HepG2 (cell line): ENCODE measurements at regions of chr11 and their contacts with region 1.

Region 1: GRCh38 chr11:86483940-86484794 is 109.5 kb downstream of the CCDC81 start:
- DNase-seq: peak; percentile 81
- ATAC-seq: peak; percentile 66
- H3K4me3 ChIP-seq: no peak overlapping the region
- H3K27ac ChIP-seq: no peak overlapping the region
- H3K4me1 ChIP-seq: peaks cover 40% of the 10 kb centered on the region
- H3K27me3 ChIP-seq: no peaks in the 10 kb centered on the region
- CTCF ChIP-seq: no peak
- EP300 ChIP-seq: no peak; a peak in 1 of 4 replicates
- POLR2A ChIP-seq: no peak
- RAD21 ChIP-seq: no peak

Region 2: GRCh38 chr11:86469491-86470393 is 14.4 kb before region 1 on chr11:
- CTCF ChIA-PET with region 1: no interaction called
- POLR2A ChIA-PET with region 1: interaction called, 11 read pairs
- in situ Hi-C with region 1: no loop called
- intact Hi-C with region 1: no loop called
- DNase-seq: peak; percentile 83
- ATAC-seq: peak; percentile 66
- H3K4me3 ChIP-seq: no peak overlapping the region
- H3K27ac ChIP-seq: no peak overlapping the region
- H3K4me1 ChIP-seq: peaks cover 17% of the 10 kb centered on the region
- H3K27me3 ChIP-seq: no peaks in the 10 kb centered on the region
- CTCF ChIP-seq: no peak
- EP300 ChIP-seq: 0 out of 4 replicates have a peak, but pooled peaks of 1 of the 2 experiments have one; percentile 10
- POLR2A ChIP-seq: no peak
- RAD21 ChIP-seq: no peak

Region 3: DNA sequence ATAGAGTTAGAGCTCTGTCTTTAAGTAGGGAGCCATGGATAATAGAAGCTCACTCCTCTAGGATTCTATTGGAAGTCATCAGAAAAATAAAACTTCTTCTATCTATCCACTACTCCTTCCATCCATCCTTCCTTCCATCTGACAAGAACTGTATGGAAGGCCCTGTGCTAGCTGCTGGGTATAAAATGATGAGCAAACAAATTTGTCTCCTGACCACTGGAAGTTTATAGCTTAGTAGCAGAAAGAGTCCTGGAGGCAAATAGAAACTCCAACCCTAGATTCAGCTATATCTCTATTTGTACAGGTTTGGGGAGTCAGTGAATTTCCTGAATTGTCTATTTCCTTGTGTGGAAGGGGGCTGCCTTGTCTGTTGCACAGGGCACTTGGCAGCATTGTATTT is 51.6 kb after region 1 on chr11:
- CTCF ChIA-PET with region 1: no interaction called
- POLR2A ChIA-PET with region 1: no interaction called
- in situ Hi-C with region 1: no loop called
- intact Hi-C with region 1: no loop called
- DNase-seq: no peak
- ATAC-seq: no peak
- H3K4me3 ChIP-seq: no peak overlapping the region
- H3K27ac ChIP-seq: no peak overlapping the region
- H3K4me1 ChIP-seq: no peaks in the 10 kb centered on the region
- H3K27me3 ChIP-seq: no peaks in the 10 kb centered on the region
- CTCF ChIP-seq: no peak
- EP300 ChIP-seq: no peak
- POLR2A ChIP-seq: no peak
- RAD21 ChIP-seq: no peak

Region 4: DNA sequence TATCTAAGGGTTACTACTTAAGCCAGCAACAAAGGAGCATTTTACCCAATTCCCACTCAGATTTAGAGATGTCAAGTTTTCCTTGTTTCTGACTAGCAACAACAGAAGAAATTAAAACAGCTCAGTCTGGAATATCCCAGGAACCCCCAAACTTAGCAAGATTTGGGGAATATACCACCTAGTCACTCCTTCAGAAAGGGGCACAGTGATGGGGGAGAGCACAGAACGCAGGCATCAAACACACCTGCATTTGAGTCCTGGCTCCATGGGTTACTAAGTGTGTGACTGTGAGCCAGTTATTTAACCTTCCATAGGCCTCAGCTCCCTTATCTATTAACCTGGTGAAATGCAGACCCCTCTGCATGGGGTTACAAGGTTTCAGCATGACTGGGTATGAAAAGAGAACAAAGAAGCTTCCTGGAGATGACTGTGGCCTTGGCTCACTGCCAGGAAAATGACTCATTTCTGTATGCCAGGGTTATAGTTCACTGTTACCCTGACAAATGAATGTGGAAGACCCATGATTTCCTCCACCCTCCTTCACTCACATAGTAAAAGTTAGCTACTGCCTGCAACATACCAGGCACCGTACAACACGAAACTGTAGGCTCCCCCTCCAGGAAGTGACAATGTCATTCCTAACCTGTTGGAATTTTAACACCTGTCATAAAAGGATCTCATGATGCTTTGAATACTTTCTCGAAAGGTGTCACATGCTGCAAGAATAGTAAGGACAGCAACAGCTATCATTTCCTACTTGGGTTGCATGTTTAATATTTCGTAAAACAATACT is 108.7 kb after region 1 on chr11:
- CTCF ChIA-PET with region 1: no interaction called
- POLR2A ChIA-PET with region 1: interaction called, 5 read pairs
- in situ Hi-C with region 1: loop called (anchors 10 kb)
- intact Hi-C with region 1: no loop called
- DNase-seq: peak; percentile 98
- ATAC-seq: peak; percentile 98
- H3K4me3 ChIP-seq: no peak overlapping the region
- H3K27ac ChIP-seq: peak overlapping the region; percentile 45
- H3K4me1 ChIP-seq: peaks cover 26% of the 10 kb centered on the region
- H3K27me3 ChIP-seq: no peaks in the 10 kb centered on the region
- CTCF ChIP-seq: 0 out of 2 replicates have a peak, but pooled peaks have one; percentile 5
- EP300 ChIP-seq: peak in 1 of 2 experiments; percentile 77; a peak in 1 of 4 replicates
- POLR2A ChIP-seq: no peak
- RAD21 ChIP-seq: no peak